WTC11 (cell line): ENCODE measurements at regions of chr7 and their contacts with region 1.

Region 1: GRCh38 chr7:101896316-101896715 is 78.9 kb downstream of the CUX1 start:
- DNase-seq: no peak
- ATAC-seq: no peak
- H3K4me3 Mint-ChIP-seq: no peak overlapping the region
- H3K27ac Mint-ChIP-seq: peak overlapping the region; percentile 82; the same call in 1 of the 2 replicates
- H3K4me1 Mint-ChIP-seq: peaks cover 71% of the 10 kb centered on the region
- H3K27me3 Mint-ChIP-seq: no peaks in the 10 kb centered on the region
- CTCF ChIP-seq: no peak

Region 2: GRCh38 chr7:102008535-102009345 is 112.4 kb after region 1 on chr7:
- CTCF ChIA-PET with region 1: no interaction called
- POLR2A ChIA-PET with region 1: no interaction called
- DNase-seq: no peak
- ATAC-seq: no peak
- H3K4me3 Mint-ChIP-seq: no peak overlapping the region
- H3K27ac Mint-ChIP-seq: peak overlapping the region; percentile 74
- H3K4me1 Mint-ChIP-seq: peaks cover 25% of the 10 kb centered on the region
- H3K27me3 Mint-ChIP-seq: no peaks in the 10 kb centered on the region
- CTCF ChIP-seq: no peak

Region 3: GRCh38 chr7:102175423-102176170 is 279.3 kb after region 1 on chr7:
- CTCF ChIA-PET with region 1: no interaction called
- POLR2A ChIA-PET with region 1: interaction called, 10 read pairs
- DNase-seq: no peak
- ATAC-seq: no peak
- H3K4me3 Mint-ChIP-seq: no peak overlapping the region
- H3K27ac Mint-ChIP-seq: peak overlapping the region; percentile 51
- H3K4me1 Mint-ChIP-seq: no peaks in the 10 kb centered on the region
- H3K27me3 Mint-ChIP-seq: no peaks in the 10 kb centered on the region
- CTCF ChIP-seq: no peak